ENCODE measurements at regions of chr15 and their contacts with region 1.

Region 1: DNA sequence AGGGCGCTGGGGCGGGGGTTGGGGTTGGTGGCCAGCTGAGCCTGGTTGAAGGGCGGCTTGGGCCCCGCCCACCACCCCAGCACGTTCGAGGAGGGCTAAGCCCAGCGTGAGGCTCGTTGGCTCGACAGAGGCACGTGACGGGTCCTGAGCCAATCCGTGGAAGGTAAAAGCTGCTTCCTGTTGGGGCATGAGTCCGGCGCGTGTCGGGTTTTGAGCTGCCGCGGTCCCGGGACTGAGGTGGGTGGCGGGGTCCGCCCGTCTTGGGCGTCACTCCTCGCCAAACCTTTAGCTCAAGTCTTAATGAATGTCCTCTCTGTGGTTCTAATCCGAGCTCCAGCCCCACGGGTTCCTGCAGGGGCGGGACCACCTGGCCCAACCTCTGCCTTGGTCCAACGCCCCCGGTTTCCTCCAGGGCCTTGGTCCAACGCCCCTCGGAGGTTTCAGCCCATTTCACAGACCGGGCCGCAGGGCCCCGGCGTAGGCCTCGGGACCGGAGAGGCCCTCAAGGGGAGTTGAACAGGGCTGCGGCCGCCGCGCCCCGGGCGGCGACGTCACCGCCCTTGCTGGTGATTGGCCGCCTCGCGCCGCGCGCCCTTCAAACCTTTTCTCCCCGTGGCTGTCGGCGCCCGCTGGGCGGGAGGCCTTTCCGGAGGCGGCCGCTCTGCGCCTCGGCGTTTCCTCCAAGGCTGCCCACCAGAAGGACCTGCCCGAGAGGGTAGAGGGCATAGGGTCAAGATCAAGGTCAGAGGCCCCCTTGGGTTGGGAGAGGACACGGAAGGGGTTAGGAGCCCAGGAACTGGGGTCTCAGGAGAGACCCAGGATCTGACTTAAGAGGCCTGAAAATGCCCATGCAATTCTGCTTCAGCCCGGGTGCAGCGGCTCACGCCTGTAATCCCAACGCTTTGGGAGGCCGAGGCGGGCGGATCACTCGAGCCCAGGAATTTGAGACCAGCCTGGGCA is at the start of gene RCCD1:
- DNase-seq: peak; percentile 99
- CTCF ChIP-seq: no peak

Region 2: DNA sequence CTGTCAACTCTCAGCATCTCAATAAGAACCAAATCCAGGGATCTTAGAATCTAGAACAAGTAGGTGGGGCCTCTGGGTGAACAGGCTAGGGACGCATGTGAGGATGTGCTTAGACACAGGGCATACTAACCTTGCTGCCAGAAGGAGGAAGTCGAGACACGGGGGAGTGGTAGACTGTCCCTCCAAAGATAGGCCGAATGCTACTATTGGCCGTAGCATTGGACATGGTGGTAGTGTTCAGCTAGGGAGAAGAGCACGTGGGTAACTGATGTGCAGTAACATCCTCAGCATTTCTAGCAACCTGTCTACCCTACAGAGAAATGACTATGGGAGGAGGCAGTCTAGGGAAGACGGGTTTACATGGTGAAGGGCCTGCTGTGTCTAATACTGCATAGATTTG is 15.3 kb after region 1 on chr15:
- CTCF ChIA-PET with region 1: interaction called, 86 read pairs
- POLR2A ChIA-PET with region 1: interaction called, 8 read pairs
- DNase-seq: no peak
- CTCF ChIP-seq: no peak

Region 3: DNA sequence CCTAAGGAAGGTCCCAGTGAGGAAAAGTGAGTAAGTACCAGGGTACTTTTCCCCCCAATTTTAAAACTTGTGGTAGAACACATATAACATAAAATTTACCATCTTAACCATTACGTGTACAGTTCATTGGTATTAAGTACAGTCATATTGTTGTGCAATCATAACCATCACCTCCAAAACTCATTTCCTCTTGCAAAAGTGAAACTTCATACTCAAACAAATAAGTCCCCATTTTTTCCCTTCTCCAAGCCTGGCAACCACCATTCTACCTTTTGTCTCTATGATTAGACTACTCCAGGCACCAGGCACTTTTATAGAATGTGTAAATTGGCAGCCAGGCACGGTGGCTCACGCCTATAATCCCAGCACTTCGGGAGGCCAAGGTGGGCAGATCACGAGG is 27.1 kb after region 1 on chr15:
- CTCF ChIA-PET with region 1: interaction called, 169 read pairs
- POLR2A ChIA-PET with region 1: interaction called, 5 read pairs
- DNase-seq: no peak
- CTCF ChIP-seq: no peak

Region 4: GRCh38 chr15:91007266-91007665 is 52.3 kb after region 1 on chr15:
- CTCF ChIA-PET with region 1: interaction called, 11 read pairs
- POLR2A ChIA-PET with region 1: no interaction called
- DNase-seq: no peak
- CTCF ChIP-seq: no peak

Region 5: GRCh38 chr15:91022075-91022835 is 67.3 kb after region 1 on chr15 and contains the start of gene VPS33B:
- CTCF ChIA-PET with region 1: interaction called, 134 read pairs
- POLR2A ChIA-PET with region 1: interaction called, 5 read pairs
- DNase-seq: peak; percentile 79
- CTCF ChIP-seq: no peak

Region 6: DNA sequence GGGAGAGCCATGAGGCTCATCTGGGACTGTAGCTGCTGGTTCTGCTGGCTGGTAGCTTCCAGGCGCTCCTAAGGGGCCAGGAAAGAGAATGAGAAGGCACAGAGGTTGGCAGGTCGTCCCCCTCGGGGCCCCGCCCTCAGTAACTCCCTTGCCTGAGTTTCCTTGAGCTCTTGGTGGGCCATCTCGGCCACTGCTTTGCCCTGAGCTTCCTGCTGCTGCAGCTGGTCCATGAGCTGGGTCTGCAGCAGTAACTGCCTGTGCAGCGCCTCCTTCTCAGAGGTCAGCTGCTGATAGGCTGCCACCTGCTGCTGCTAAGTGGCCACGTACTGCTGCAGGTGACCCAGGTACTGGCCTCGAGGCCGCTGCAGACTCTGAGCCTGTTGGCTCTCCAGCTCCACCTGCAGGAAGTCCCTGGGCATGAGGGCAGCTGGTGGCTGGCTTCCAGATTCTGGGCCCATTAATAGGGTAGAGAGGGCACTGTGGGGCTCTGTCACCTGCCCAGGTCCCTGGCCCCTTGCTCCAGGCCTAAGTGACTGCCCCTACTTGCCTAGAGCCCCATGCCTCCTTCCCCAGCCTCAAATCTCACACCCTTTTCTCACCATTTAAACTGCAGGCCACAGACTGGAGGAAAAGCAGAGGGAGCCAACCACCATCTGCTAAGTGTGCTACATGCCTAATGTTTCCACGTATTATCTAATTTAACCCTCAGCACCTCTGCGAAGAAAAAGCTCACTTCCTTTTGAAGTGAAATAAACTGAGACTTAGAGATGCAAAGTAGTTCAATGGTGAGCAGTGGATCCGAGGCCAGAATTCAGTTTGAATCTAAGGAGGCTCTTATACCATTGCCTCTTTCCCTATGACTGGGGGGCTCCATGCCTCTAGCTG is 78.2 kb after region 1 on chr15:
- CTCF ChIA-PET with region 1: interaction called, 134 read pairs
- POLR2A ChIA-PET with region 1: no interaction called
- DNase-seq: peak; percentile 59
- CTCF ChIP-seq: peak; percentile 86

Region 7: DNA sequence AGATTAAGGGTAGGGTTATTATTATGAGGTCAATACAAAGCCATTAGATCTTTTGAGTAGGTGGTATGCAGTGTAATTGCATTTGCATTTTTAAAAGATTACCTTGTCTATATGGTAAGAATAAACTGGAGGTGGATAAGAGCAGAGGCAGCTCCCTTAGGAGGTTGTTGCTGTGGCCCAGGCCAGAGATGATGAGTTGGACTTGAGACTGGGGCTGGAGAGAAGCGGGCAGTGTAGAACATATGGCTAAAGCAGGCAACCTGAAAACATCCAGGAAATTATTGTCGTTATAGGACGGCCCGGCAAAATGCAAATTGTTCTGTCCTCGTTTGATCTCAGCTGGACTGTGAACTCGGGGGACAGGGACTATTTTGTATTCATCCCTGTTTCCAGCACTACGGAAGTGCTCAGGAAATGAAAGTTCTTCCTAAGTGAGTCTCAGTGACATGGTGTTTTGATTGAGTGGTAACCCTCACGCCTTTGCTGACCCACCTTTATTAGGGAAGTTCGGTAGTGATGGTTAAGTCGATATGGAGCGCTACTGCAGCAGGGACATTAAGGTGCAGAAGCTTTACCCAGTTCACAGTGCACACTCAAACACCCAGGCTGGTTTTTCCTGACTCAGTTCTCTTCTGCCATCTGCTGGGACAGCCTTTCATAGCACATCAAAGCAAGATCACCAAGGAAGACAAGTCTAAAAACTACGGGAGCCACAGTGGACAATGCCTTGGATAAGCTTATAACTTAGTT is 94.6 kb after region 1 on chr15:
- CTCF ChIA-PET with region 1: interaction called, 54 read pairs
- POLR2A ChIA-PET with region 1: no interaction called
- DNase-seq: peak; percentile 54
- CTCF ChIP-seq: peak; percentile 76

Region 8: GRCh38 chr15:91061997-91062396 is 107.0 kb after region 1 on chr15:
- CTCF ChIA-PET with region 1: no interaction called
- POLR2A ChIA-PET with region 1: no interaction called
- DNase-seq: no peak
- CTCF ChIP-seq: no peak

Measured in GM10248 (cell line).